Mammary epithelial cell (primary cell): ENCODE measurements at regions of chr1 and their contacts with region 1.

Region 1: DNA sequence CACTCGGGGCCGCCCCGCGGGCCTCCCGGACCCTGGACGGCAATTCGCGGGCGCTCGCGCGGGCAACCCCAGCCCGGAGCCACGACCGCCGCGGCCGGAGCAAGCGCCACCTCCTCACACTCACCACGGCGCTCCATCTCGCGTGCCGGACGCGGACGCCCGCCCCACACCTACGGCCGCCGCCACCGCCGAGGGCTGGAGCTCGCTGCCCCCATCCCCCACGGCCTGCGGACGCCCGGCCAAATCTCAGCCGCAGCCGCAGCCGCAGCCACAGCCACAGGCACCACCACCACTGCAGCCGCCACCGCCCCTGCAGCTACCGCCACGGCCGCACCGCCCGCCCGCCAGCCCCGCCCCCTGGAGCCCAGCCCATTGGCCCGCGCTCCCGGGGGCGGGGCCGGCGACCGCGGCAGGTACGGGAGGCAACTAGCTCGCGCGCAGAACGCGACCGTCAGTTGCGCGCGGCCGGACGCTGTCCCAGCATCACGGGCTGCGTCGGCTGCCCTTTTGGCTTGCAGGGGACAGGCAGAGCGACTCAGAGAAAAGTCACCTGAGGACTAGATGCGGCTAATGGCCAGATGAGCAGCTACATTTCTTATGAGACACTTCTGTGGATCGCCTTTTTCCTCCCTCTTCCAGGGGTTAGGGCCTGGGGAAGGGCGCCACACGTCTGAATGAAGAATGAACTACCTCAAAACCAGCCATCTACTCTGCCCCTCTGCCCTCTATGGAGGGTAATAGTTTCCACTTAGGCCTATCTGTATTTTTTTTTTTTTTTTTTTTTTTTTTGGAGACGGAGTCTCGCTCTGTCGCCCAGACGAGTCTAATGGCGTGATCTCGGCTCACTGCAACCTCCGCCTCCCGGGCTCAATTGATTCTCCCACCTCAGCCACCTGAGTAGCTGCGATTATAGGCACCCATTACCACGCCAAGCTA is at the start of gene ARHGAP29:
- DNase-seq: peak; percentile 83
- H3K4me3 ChIP-seq: peak within 1 kb of the TSS; percentile 80 to 99 (median 96)
- H3K27ac ChIP-seq: peak within 1 kb of the TSS; percentile 82
- H3K4me1 ChIP-seq: peaks cover 34% of the 10 kb centered on the region
- H3K27me3 ChIP-seq: no peaks in the 10 kb centered on the region
- CTCF ChIP-seq: no peak
- total RNA-seq, gene ARHGAP29: 54.7 to 100 TPM

Region 2: GRCh38 chr1:93909146-93910050 is 328.2 kb before region 1 on chr1 and contains the start of gene GCLM:
- CTCF ChIA-PET with region 1: no interaction called
- dilution Hi-C with region 1: no loop called
- in situ Hi-C with region 1: no loop called
- intact Hi-C with region 1: loop called (anchors 10 kb)
- DNase-seq: peak; percentile 94
- H3K4me3 ChIP-seq: peak within 1 kb of the TSS; percentile 50 to 90 (median 78)
- H3K27ac ChIP-seq: peak within 1 kb of the TSS; percentile 88
- H3K4me1 ChIP-seq: peaks cover 16% of the 10 kb centered on the region
- H3K27me3 ChIP-seq: no peaks in the 10 kb centered on the region
- CTCF ChIP-seq: peak; percentile 68 to 70
- total RNA-seq, gene GCLM: 96.5 to 129 TPM

Region 3: DNA sequence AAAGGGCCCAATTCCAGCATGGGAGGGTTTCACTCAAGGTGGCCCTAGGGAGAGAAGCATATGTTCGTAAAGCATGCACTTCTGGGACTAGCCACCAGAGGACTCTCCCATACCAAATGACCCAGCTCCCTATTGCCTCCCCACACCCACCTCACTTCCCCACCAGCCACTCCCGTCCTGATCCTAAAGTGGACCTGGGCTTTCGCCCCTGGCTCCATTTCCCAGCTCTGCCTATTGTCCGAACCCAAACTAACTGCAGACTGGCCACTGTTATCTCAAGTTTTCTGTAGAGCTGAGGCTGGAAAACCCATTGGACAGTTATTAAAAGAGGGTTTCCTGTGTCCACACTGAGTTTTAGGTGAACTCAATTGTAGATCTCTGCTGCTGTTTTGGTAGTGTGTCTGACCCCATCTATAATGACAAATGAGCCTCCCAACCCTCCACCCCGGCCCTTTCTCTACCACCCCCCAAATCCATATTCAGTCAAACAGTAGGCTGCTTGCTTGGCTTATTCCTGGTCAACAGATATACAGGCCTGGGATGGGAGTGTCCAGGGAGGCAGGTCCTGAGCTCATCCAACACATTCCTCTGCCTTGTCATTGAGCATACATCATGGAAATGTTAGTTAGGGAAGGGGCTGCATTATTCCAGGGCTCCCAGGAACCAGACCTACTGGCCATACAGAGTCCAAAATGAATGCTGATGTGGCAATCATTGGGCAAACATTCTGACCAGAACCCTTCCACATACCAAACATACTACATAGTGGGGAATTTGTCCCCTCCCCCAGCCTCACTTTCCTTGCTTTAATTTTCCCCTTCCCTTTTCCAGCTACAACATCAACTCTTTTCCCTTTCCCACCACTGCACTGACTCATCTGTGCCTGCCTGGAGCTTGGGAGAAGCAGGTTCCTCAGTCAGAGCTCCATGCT is 175.8 kb before region 1 on chr1:
- CTCF ChIA-PET with region 1: interaction called, 4 read pairs
- dilution Hi-C with region 1: no loop called
- in situ Hi-C with region 1: no loop called
- intact Hi-C with region 1: loop called (anchors 2 kb)
- DNase-seq: peak; percentile 47
- H3K4me3 ChIP-seq: no peak overlapping the region
- H3K27ac ChIP-seq: no peak overlapping the region
- H3K4me1 ChIP-seq: peaks cover 7% of the 10 kb centered on the region
- H3K27me3 ChIP-seq: no peaks in the 10 kb centered on the region
- CTCF ChIP-seq: peak; percentile 92 to 96

Region 4: GRCh38 chr1:94322696-94323095 is 85.1 kb after region 1 on chr1:
- CTCF ChIA-PET with region 1: no interaction called
- dilution Hi-C with region 1: loop called (anchors 5 kb)
- in situ Hi-C with region 1: loop called in 1 of 2 experiments (anchors 5 kb)
- intact Hi-C with region 1: loop called (anchors 2 kb)
- DNase-seq: peak; percentile 62
- H3K4me3 ChIP-seq: no peak overlapping the region
- H3K27ac ChIP-seq: peak overlapping the region; percentile 93
- H3K4me1 ChIP-seq: peaks cover 58% of the 10 kb centered on the region
- H3K27me3 ChIP-seq: no peaks in the 10 kb centered on the region
- CTCF ChIP-seq: no peak

Region 5: GRCh38 chr1:94463765-94464330 is 226.3 kb after region 1 on chr1:
- CTCF ChIA-PET with region 1: no interaction called
- dilution Hi-C with region 1: no loop called
- in situ Hi-C with region 1: no loop called
- intact Hi-C with region 1: loop called (anchors 5 kb)
- DNase-seq: peak; percentile 55
- H3K4me3 ChIP-seq: no peak overlapping the region
- H3K27ac ChIP-seq: no peak overlapping the region
- H3K4me1 ChIP-seq: no peaks in the 10 kb centered on the region
- H3K27me3 ChIP-seq: no peaks in the 10 kb centered on the region
- CTCF ChIP-seq: peak; percentile 43 to 58